ENCODE measurements at regions of chr4 and their contacts with region 1.

Region 1: GRCh38 chr4:781493-782216 is 44.3 kb downstream of the CPLX1 start:
- DNase-seq: peak; percentile 99
- ATAC-seq: peak; percentile 96 to 98 (median 97)
- H3K4me3 ChIP-seq: peak overlapping the region; percentile 100
- H3K27ac ChIP-seq: peak overlapping the region; percentile 94
- H3K4me1 ChIP-seq: peaks cover 19% of the 10 kb centered on the region
- H3K27me3 ChIP-seq: peaks cover 0 to 22% (median 0%) of the 10 kb centered on the region in 3 donors
- CTCF ChIP-seq: no peak

Region 2: DNA sequence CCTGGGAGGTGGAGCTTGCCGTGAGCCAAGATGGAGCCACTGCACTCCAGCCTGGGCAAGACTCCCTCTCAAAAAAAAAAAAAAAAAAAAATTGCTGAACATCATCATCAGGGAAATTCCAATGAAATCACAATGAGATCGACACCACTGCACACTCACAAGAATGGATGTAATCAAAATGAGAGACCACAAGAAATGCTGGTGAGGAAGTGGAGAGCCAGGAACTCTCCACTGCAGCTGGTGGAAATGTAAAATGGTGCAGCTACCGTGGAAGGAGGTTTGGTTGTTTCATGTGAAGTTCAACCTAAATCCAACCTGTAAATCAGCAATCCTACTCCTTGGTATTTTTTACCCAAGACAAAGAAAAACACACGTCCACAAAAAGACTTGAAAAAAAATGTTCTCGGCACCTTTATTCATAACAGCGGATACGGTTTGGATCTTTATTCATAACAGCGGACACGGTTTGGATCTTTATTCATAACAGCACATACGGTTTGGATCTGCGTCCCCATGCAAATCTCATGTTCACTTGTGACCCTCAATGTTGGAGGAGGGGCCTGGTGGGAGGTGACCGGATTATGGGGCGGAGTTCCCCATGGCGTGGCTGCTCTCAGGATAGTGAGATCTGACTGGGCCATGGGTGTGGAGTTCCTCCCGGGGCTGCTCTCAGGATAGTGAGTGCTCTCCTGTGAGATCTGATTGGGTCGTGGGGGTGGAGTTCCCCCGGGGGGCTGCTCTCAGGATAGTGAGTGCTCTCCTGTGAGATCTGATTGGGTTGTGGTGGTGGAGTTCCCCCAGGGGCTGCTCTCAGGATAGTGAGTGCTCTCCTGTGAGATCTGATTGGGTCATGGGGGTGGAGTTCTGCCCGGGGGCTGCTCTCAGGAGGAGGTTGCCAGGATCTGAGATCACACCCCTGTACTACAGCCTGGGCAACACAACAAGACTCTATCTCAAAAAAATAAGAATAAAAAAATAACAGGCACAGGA is 142.7 kb after region 1 on chr4:
- intact Hi-C with region 1: loop called in 1 of 2 experiments (anchors 10 kb)
- DNase-seq: no peak
- ATAC-seq: peak in 1 of 4 donors; percentile 28
- H3K4me3 ChIP-seq: no peak overlapping the region
- H3K27ac ChIP-seq: no peak overlapping the region
- H3K4me1 ChIP-seq: peaks cover 9% of the 10 kb centered on the region
- H3K27me3 ChIP-seq: no peaks in the 10 kb centered on the region
- CTCF ChIP-seq: no peak